Astrocyte of the cerebellum (primary cell): ENCODE measurements at regions of chr11 and their contacts with region 1.

Region 1: GRCh38 chr11:79864882-79865281 is 424.1 kb upstream of the TENM4 start:
- DNase-seq: no peak
- H3K4me3 ChIP-seq: no peak overlapping the region
- CTCF ChIP-seq: no peak

Region 2: DNA sequence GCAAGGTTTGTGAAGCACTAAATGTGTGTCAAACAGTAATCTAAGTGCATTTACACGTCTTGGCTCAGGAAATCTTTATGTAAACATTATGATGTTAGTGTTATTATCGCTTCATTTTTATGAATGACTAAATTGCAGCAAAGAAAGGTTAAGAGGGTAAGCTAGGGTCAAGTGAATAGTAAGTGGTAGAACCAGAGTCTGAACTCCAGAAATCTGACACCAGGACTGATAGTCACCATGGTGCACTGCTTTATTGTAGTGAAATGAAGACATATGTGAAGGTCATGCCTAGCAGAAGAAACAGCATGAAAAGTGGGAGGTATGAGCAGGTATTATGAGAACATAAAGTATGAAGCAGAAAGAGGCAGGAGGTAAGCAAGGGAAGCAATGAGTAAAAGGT is 55.4 kb before region 1 on chr11:
- in situ Hi-C with region 1: loop called (anchors 5 kb)
- DNase-seq: no peak
- H3K4me3 ChIP-seq: no peak overlapping the region
- CTCF ChIP-seq: no peak

Region 3: DNA sequence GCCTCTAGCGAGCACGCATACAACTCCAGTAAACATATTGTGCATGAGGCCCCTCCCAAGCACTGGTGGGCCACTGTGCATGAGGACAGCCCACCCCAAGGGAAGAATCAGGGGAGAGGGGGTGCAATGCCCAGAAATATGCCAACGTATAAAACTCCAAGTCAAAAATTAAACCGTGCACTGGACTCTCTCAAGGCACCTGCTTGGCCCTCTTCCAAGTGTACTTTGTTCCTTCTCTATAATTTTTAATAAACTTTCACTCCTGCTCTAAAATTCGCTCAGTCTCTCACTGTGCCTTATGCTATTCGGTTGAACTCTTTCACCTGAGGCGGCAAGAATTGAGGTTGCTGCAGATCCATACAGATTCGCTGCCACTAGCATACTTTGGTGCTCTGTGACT is 41.3 kb after region 1 on chr11:
- in situ Hi-C with region 1: no loop called
- DNase-seq: no peak
- H3K4me3 ChIP-seq: no peak overlapping the region
- CTCF ChIP-seq: no peak

Region 4: GRCh38 chr11:79940151-79940550 is 75.3 kb after region 1 on chr11:
- in situ Hi-C with region 1: no loop called
- DNase-seq: no peak
- H3K4me3 ChIP-seq: no peak overlapping the region
- CTCF ChIP-seq: no peak

Region 5: DNA sequence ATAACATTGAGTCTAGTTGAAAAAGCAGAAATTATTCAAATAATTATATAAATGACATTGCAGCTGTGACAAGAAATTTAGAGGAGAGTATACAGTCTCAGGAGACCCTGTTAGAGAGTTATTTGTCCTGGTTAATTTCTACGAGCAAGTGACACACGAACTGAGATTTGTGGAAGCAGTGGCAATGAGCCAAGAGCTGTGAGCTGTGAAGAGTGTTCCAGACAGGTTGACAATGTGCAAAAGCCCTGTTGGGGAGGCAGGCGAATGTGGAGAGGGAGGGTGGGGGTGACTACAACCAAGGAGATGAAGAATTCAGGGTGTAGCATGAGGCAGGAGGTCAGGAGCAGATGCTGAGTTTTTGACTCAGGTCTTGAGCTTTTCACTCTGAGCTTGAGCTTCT is 196.2 kb after region 1 on chr11:
- in situ Hi-C with region 1: no loop called
- DNase-seq: no peak
- H3K4me3 ChIP-seq: no peak overlapping the region
- CTCF ChIP-seq: no peak